Right ventricle myocardium superior (tissue), 1 donor: ENCODE measurements at regions of chr14 and their contacts with region 1.

Region 1: DNA sequence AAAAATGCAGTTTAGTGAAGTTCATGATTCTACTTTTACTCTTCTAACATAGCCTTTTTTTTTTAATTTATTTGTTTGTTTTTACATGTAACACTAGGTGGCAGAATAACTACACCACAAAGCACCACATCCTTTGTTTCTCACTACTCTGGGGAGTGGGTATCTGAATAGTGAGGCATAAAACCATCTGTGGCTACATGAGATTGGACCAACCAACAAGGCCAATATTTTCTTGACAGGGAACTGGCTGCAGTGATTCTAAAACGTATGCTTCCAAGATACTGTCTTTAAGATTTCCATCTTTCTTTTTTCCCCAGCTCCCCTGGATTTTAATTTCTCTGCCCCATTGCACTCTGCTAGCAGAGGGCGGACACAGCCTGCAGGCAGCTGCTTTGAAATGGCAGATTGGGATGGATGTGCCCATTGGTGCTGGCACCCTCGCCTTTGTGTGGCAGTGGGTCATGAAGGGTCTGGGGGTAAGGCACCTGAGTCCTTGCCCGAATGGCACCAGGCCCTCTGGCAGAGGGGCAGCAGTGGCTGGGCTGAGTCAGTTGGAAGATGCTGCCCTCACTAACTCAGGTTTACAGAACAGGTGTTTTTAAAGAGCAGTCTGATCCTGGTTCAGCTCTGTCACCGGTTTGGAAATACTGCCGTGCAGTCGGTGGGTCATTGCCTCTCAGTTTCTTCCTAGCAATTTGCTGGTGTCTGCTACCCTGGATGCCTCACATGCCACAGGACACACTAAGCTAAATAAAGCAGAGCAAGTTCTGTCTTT is 429.1 kb downstream of the RAD51B start:
- DNase-seq: peak; percentile 44
- ATAC-seq: peak; percentile 76

Region 2: DNA sequence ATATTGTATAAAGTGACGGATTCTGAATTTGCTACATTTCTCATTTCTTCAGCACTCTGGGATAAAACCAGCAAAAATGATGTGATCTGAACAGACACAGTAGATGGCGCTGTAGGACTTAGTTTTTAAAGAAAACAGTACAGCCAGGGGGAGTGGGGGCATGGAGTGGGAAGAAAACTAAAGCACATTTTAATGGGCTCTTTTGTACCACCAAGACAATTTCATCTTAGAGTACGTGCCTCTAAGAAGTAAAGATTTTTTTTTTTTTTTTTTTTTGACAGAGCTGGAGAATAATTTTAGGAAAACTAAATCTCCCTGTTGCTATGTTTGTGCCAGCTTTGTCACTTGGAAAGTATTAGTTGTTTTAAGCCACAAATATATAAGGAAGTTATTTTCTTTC is 304.7 kb before region 1 on chr14:
- intact Hi-C with region 1: loop called (anchors 5 kb)
- DNase-seq: peak; percentile 45
- ATAC-seq: peak; percentile 54

Region 3: DNA sequence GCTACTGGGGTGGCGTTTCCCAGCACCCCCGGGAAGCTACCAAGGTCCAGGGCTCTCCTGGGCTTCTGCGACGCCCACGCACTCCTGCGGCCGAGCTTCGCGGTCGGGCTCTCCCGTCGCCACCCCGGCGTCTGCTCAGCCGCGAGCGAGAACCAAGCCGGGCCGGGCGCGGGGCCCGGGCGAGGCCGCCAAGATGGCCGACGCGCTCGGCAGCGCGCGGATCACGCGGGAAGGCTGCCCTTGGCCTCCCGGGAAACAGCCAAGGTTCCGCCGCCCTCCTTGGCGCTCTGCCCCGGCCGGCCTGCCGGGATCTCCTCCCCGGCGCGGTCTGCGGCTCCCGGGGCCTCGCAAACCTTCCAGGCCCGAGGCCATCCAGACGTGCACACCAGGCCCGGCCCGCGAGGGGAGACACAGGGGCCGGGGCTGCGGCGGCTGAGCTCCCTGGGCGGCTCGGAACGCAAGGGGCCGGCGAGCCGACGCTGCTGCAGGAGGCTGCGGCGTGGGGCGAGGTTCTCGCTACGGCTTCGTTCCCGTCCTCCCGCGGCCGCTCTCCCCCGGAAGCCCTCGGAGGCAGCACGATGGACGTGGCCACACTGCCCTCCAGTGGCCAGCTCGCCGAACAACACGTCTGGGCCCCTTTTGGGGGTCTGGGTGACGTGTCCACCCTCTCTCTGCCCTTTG is 567.7 kb after region 1 on chr14:
- intact Hi-C with region 1: loop called (anchors 2 kb)
- DNase-seq: peak; percentile 94
- ATAC-seq: peak; percentile 95